Tibial artery (tissue), 4 donors: ENCODE measurements at regions of chr3 and their contacts with region 1.

Region 1: DNA sequence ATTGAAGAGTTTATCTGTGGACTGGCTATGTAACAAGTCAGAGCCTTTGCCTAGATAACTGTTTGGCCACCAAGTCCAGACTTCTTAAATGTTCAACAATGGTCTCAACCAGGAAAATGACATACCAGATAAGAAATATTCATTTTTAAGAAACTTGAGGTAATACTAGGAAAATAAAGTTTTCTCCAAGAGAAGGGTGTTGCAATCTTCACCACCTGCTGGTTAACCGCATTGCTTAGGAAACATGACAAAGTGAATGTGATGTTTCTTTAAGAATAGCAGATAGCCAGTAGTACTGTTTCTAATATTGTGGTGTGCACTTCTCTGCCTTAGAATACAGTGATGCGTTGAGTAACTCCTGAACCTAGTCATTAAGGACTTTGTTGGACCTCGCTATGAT is 321.5 kb upstream of the CADM2 start:
- DNase-seq: no peak
- H3K4me3 ChIP-seq: no peak overlapping the region
- H3K27ac ChIP-seq: no peak overlapping the region
- H3K4me1 ChIP-seq: no peaks in the 10 kb centered on the region
- H3K27me3 ChIP-seq: no peaks in the 10 kb centered on the region
- CTCF ChIP-seq: no peak

Region 2: GRCh38 chr3:84109911-84110310 is 527.4 kb before region 1 on chr3:
- intact Hi-C with region 1: loop called (anchors 5 kb)
- DNase-seq: no peak
- H3K4me3 ChIP-seq: no peak overlapping the region
- H3K27ac ChIP-seq: no peak overlapping the region
- H3K4me1 ChIP-seq: no peaks in the 10 kb centered on the region
- H3K27me3 ChIP-seq: no peaks in the 10 kb centered on the region
- CTCF ChIP-seq: no peak